ENCODE measurements at regions of chr1 and their contacts with region 1.

Region 1: DNA sequence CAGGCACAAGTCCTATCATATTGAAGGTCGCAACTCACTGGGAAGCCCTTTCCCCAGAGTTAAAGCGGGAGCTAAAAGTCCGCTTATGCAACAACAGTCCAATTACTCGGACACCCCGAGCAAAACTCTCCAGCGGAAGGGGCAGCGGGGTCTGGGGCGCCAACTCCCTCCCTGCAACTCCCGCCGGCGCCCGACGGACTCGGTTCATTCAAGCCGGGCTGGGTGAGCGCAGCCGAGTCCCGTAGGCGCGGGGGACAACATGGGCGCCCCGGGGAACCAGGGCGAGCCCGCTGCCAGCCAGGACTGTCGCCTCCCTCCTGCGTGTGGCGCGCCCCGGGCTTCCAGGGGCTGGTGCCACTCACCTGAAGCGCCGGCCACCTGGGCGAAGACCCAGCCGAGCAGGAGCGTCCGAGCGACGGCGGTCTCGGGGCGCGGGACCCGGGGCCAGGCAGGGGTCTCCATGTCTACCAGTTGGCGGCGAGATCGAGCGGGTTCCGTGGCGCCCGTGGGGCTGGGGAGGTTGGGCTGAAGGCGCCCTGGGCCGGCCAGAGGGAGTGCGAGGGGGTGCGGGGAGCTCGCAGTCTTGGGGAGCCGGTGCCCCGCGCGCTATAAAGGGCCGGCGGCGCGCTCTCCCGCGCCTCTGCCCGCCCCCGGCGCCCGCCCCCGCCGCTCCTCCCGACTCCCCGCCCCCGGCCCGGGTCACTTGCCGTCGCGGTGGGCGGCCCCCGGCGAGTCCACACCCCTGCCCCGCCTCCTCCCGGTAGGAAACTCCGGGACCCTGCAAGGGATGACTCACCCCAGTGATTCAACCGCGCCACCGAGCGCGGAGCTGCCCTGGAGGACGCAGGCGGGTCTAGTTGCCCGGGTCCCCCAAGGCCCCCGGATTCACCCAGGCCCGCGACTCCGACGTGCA is at the start of gene F3:
- DNase-seq: peak; percentile 79
- H3K4me3 ChIP-seq: peak within 1 kb of the TSS; percentile 78
- H3K27ac ChIP-seq: peak within 1 kb of the TSS; percentile 75
- H3K27me3 ChIP-seq: no peaks in the 10 kb centered on the region
- CTCF ChIP-seq: no peak

Region 2: DNA sequence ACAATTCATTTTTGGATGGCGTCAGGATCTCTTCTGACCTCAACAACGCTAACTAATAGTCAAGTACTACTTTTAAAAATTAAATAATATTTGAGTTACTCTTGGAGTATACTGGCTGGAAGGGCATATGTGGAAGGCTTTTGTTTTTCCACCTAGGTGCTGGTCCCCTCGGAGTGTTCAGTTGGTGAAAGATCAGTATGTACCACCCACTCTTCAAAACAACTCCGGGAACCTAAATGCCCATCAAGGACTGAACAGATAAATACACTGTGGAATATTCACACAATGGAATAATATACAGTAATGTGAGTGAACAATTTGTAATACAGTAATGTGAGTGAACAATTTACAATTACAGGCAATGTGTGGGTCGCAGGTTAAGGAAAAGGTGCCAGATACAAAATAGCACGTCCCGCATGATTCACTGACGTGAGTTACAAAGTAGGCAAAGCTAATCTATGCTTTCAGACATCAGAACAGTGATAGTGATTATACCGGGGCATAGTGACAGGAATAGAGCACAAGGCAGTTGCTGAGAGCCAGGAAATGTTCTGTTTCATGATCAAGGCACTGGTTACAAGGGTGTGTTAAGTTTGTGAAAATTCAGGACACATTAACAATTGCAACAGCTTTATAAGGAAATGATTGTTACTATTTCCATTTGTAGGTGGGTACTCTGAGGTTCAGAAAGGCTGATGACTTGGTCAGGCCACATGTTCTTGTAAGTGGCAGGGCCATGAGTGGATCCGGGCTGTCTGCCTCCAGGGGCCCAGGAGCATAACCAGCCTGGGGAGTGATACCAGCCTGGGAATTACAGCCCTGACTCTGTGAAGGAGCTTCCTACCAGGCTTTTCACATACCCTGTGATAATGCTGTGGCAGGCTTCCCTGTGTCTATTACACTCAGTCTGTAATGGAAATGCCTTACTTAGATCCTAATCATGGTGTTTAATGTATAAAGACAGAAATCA is 182.5 kb before region 1 on chr1:
- in situ Hi-C with region 1: no loop called
- DNase-seq: no peak
- H3K4me3 ChIP-seq: no peak overlapping the region
- H3K27ac ChIP-seq: no peak overlapping the region
- H3K27me3 ChIP-seq: no peaks in the 10 kb centered on the region
- CTCF ChIP-seq: no peak

Region 3: GRCh38 chr1:94792473-94793295 is 251.3 kb after region 1 on chr1:
- in situ Hi-C with region 1: loop called (anchors 25 kb)
- DNase-seq: peak; percentile 68
- H3K4me3 ChIP-seq: no peak overlapping the region
- H3K27ac ChIP-seq: peak overlapping the region; percentile 59
- H3K27me3 ChIP-seq: no peaks in the 10 kb centered on the region
- CTCF ChIP-seq: peak; percentile 67

Measured in brain microvascular endothelial cell (primary cell).